Activated CD4-positive, alpha-beta T cell treated with anti-CD3 and anti-CD28 coated beads for 36 hours (primary cell): ENCODE measurements at regions of chr19 and their contacts with region 1.

Region 1: GRCh38 chr19:57410877-57411671 is at the start of gene ZNF17:
- DNase-seq: peak; percentile 96
- ATAC-seq: peak; percentile 100
- H3K4me3 Mint-ChIP-seq: peak within 1 kb of the TSS; percentile 93
- H3K27ac Mint-ChIP-seq: peak within 1 kb of the TSS; percentile 84
- H3K4me1 Mint-ChIP-seq: peaks cover 14% of the 10 kb centered on the region
- H3K27me3 Mint-ChIP-seq: no peaks in the 10 kb centered on the region
- total RNA-seq, gene ZNF17: 6.4 to 8.3 TPM

Region 2: GRCh38 chr19:57240311-57241090 is 170.6 kb before region 1 on chr19 and contains the start of gene ZNF805:
- CTCF ChIA-PET with region 1: no interaction called
- POLR2A ChIA-PET with region 1: no interaction called
- intact Hi-C with region 1: loop called in 1 of 2 experiments (anchors 1 kb)
- DNase-seq: peak; percentile 97
- ATAC-seq: peak; percentile 95
- H3K4me3 Mint-ChIP-seq: peak within 1 kb of the TSS; percentile 80
- H3K27ac Mint-ChIP-seq: peak within 1 kb of the TSS; percentile 92
- H3K4me1 Mint-ChIP-seq: peaks cover 23% of the 10 kb centered on the region
- H3K27me3 Mint-ChIP-seq: no peaks in the 10 kb centered on the region
- total RNA-seq, gene ZNF805: 6.4 to 7.1 TPM

Region 3: GRCh38 chr19:57477191-57478008 is 66.3 kb after region 1 on chr19 and contains the start of gene ZNF772:
- CTCF ChIA-PET with region 1: no interaction called
- POLR2A ChIA-PET with region 1: no interaction called
- intact Hi-C with region 1: loop called in 1 of 2 experiments (anchors 1 kb)
- DNase-seq: peak; percentile 92
- ATAC-seq: peak; percentile 100
- H3K4me3 Mint-ChIP-seq: peak within 1 kb of the TSS; percentile 76
- H3K27ac Mint-ChIP-seq: peak within 1 kb of the TSS; percentile 79
- H3K4me1 Mint-ChIP-seq: peaks cover 17% of the 10 kb centered on the region
- H3K27me3 Mint-ChIP-seq: no peaks in the 10 kb centered on the region
- total RNA-seq, gene ZNF772: 6.5 to 7.5 TPM

Region 4: DNA sequence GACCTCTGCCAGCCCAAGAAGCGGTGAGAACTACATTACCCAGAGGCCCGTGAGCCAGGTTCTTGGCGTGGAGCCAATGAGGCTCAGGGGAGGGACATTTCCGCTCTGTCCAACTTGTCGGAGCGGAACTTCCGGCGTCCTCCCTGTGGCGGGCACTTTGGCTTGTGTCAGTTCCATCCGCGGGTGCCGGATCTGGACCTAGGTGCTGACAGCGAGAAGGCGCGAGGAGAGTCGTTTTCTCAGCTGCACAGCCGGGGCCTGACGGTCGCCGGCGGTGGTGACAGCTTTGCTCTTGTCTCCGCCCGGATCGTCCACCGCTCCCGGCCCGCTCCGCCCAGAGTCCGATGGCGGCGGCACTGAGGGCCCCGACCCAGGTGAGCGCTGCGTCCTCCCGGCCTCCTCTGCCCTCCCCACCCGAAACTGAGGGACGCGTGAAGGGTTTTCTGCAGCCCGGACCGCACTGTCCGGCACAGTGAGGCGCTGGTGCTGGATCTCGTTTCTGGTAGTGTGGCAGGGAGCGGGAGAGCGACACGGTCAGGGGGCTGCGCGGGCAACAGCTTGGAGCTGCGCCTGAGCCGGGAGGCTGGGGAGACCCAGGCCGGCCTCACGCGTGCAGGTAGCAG is 188.8 kb after region 1 on chr19 and contains the start of gene ZNF530:
- CTCF ChIA-PET with region 1: no interaction called
- POLR2A ChIA-PET with region 1: no interaction called
- intact Hi-C with region 1: loop called in 1 of 2 experiments (anchors 1 kb)
- DNase-seq: peak; percentile 95
- ATAC-seq: peak; percentile 98
- H3K4me3 Mint-ChIP-seq: peak within 1 kb of the TSS; percentile 81
- H3K27ac Mint-ChIP-seq: peak within 1 kb of the TSS; percentile 79
- H3K4me1 Mint-ChIP-seq: peaks cover 12% of the 10 kb centered on the region
- H3K27me3 Mint-ChIP-seq: no peaks in the 10 kb centered on the region
- total RNA-seq, gene ZNF530: 7.1 to 7.2 TPM

Region 5: GRCh38 chr19:57769345-57770131 is 358.5 kb after region 1 on chr19 and contains the start of gene ZNF586:
- CTCF ChIA-PET with region 1: no interaction called
- POLR2A ChIA-PET with region 1: no interaction called
- intact Hi-C with region 1: loop called in 1 of 2 experiments (anchors 1 kb)
- DNase-seq: peak; percentile 93
- ATAC-seq: peak; percentile 99
- H3K4me3 Mint-ChIP-seq: peak within 1 kb of the TSS; percentile 90
- H3K27ac Mint-ChIP-seq: peak within 1 kb of the TSS; percentile 93
- H3K4me1 Mint-ChIP-seq: peaks cover 25% of the 10 kb centered on the region
- H3K27me3 Mint-ChIP-seq: no peaks in the 10 kb centered on the region
- total RNA-seq, gene ZNF586: 20.3 to 20.5 TPM

Region 6: GRCh38 chr19:58002384-58003173 is 591.5 kb after region 1 on chr19 and contains the start of gene ZNF606:
- CTCF ChIA-PET with region 1: no interaction called
- POLR2A ChIA-PET with region 1: no interaction called
- intact Hi-C with region 1: loop called in 1 of 2 experiments (anchors 1 kb)
- DNase-seq: peak; percentile 93
- ATAC-seq: peak; percentile 99
- H3K4me3 Mint-ChIP-seq: peak within 1 kb of the TSS; percentile 80
- H3K27ac Mint-ChIP-seq: peak within 1 kb of the TSS; percentile 86
- H3K4me1 Mint-ChIP-seq: peaks cover 29% of the 10 kb centered on the region
- H3K27me3 Mint-ChIP-seq: no peaks in the 10 kb centered on the region
- total RNA-seq, gene ZNF606: 6.0 to 8.9 TPM